Posterior vena cava (tissue), 2 donors: ENCODE measurements at regions of chr3 and their contacts with region 1.

Region 1: DNA sequence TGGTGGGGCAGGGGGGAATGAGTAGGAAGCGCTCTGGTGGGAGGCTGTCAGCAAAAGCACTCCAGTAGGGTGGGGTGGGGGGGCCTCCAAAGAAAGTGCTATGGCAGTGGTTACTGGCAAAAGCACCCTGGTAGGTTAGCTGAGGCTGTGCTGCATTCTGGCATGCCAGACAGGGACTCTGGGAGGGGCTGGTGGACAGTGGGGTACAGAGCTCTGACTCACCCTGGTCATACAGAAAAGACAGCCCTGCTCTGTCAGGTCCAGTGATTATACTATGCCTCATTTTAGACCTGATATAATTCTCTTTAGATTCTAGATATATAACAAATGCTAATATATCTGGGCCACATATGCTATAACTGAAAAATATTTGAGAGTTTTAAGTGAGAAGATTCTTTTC is 82.8 kb upstream of the CPNE4 start:
- DNase-seq: no peak

Region 2: DNA sequence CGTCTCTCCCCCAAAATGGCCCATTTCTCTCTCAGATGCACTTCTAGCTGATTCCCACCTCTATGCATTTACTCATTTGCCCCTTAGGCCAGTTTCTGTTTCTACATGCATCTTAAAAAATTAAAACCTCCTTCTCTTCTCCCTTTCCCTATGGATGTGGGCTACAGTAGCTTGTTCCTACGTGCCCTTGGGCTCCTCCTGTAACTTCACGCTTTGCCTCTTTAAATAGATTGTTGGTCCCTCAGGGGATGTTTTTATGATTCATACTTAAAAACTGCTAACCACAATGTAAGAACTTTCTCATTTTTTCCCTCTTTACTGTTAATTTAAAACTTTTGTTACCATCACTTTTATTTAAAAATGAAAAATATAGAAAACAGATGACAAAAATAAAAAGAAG is 429.3 kb before region 1 on chr3:
- intact Hi-C with region 1: loop called in 1 of 2 experiments (anchors 5 kb)
- DNase-seq: no peak

Region 3: GRCh38 chr3:132083583-132084279 is 33.9 kb before region 1 on chr3:
- intact Hi-C with region 1: no loop called
- DNase-seq: no peak

Region 4: GRCh38 chr3:132294906-132295305 is 177.3 kb after region 1 on chr3:
- intact Hi-C with region 1: no loop called
- DNase-seq: no peak